Psoas muscle (tissue), 8 donors: ENCODE measurements at regions of chr12 and their contacts with region 1.

Region 1: DNA sequence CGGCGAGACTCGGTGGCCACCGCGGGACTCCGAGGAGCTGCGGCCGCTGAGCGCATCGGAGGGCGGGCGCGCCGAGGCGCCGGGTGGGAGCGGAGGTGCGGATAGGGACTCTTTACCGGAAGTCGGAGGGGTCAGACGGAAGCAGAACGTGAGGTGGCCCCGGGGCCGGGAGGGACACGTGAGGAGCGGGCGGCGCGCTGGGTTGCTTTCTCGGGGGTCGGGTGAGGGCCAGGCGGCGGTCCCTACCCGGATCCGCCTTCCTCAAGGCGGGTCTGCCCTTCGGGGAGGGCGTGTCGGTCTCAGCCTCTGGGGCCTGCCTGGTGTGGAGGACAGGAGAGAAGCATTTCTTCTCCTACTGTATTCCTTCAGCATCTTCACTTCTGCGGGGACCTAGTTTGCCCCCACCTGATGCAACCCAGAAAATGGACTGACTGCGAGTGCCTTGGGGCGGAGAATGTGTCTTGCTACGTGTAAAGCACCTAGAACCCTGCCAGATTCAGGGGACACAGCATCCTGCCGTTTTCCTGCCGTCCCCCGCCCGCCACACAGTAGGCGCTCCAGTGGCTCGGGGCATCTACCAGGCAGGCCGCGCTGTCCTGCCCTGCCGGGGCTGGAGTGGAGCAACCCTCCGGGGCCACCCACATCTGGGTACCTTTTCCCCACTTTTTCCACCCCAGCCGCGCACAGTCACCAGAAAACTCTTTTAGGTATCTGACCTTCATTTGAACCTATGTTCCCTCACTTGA is 517 bp upstream of the ATXN2 start:
- DNase-seq: peak; percentile 93 to 96
- ATAC-seq: peak; percentile 89 to 91 (median 90)
- H3K4me3 ChIP-seq: peak overlapping the region; percentile 85
- H3K27ac ChIP-seq: peak overlapping the region; percentile 96
- H3K4me1 ChIP-seq: peaks cover 29% of the 10 kb centered on the region
- H3K27me3 ChIP-seq: no peaks in the 10 kb centered on the region
- CTCF ChIP-seq: no peak

Region 2: DNA sequence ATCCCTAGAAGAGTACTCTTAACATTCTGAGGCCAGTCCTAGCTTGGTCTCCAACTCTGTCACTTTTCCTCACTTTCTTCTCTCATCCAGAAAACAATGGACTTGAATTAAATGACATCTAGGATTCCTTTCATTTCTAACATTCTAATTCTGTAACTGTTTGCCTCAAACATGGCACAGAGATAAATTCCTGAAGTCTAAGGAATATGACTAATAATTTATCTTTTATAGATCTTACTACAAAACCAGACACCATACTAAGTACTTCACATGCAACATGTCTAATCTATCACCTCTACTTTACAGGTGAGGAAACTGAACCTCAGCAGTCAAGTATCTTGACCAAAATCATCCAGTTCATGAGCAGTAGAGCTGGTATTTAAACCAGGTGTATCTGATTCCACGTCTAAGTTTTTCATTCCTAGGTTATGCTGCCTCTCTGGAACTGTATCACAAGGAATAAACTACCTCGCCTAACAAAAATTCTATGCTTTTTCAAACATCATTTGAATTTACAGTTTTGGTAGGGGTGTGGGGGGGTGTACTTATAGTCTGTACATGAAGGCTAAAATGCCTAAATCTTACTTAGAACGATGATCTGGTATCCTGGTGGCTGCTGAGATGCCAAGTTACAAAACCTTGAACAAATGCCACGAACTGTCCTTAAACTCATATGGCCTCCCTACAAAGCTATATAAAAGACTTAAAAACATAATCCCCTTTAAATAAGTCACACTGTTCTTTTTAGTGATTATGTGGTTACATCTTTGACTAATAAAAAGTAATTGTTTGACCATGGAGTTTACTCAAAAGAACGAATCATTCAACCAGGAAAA is 42.1 kb before region 1 on chr12:
- intact Hi-C with region 1: loop called in 1 of 2 experiments (anchors 5 kb)
- DNase-seq: no peak
- ATAC-seq: no peak
- H3K4me3 ChIP-seq: no peak overlapping the region
- H3K27ac ChIP-seq: no peak overlapping the region
- H3K4me1 ChIP-seq: peaks cover 21% of the 10 kb centered on the region
- H3K27me3 ChIP-seq: no peaks in the 10 kb centered on the region
- CTCF ChIP-seq: no peak

Region 3: DNA sequence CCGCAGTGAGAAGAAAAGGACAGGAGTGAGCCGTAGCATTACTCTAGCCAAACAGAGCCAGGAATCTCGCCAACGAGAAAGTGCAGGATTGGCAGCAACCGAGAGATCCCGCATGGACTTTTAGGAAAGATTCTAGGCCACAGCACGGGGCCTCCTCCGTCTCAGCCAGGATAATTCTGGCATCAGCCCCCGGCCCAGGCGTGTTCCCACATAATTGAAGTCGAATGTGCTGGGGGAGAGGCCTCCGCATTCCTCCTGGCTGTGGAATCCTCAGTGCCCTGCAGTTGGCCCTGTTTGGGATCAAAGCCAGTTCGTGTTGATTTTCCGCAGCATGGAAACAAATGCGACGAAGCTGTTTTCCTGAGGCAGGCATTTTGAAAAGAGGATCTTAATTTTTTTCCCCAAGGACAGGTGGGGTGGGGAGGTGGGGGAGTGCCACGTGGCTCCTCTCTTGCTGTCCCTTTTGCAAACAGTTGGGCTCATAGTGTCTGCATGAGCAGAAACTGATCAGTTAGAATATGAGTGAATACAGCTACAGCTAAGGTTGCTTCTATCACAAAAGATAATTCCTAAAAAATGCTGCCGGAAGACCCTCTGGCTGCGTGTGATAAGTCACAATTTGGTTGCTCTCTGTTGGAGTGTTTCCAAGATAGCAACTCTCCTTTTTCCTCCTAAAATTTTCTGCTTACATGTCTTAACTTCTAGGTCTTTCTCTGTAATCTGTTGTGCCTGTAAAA is 36.7 kb after region 1 on chr12:
- intact Hi-C with region 1: loop called in 1 of 2 experiments (anchors 1 kb)
- DNase-seq: peak; percentile 66 to 67
- ATAC-seq: peak; percentile 47 to 79 (median 70)
- H3K4me3 ChIP-seq: peak overlapping the region; percentile 32
- H3K27ac ChIP-seq: peak overlapping the region; percentile 5
- H3K4me1 ChIP-seq: peaks cover 13% of the 10 kb centered on the region
- H3K27me3 ChIP-seq: no peaks in the 10 kb centered on the region
- CTCF ChIP-seq: no peak